ENCODE measurements at regions of chr2 and their contacts with region 1.

Region 1: GRCh38 chr2:47016172-47016913 is 100.7 kb upstream of the MCFD2 start:
- DNase-seq: peak; percentile 93 to 95
- ATAC-seq: peak; percentile 88 to 89
- H3K4me3 ChIP-seq: no peak overlapping the region
- H3K27ac ChIP-seq: peak overlapping the region; percentile 85 to 90 (median 85)
- H3K4me1 ChIP-seq: peaks cover 32 to 48% of the 10 kb centered on the region in 2 donors
- H3K27me3 ChIP-seq: no peaks in the 10 kb centered on the region
- CTCF ChIP-seq: peak in 1 of 5 experiments; percentile 26
- POLR2A ChIP-seq: no peak

Region 2: DNA sequence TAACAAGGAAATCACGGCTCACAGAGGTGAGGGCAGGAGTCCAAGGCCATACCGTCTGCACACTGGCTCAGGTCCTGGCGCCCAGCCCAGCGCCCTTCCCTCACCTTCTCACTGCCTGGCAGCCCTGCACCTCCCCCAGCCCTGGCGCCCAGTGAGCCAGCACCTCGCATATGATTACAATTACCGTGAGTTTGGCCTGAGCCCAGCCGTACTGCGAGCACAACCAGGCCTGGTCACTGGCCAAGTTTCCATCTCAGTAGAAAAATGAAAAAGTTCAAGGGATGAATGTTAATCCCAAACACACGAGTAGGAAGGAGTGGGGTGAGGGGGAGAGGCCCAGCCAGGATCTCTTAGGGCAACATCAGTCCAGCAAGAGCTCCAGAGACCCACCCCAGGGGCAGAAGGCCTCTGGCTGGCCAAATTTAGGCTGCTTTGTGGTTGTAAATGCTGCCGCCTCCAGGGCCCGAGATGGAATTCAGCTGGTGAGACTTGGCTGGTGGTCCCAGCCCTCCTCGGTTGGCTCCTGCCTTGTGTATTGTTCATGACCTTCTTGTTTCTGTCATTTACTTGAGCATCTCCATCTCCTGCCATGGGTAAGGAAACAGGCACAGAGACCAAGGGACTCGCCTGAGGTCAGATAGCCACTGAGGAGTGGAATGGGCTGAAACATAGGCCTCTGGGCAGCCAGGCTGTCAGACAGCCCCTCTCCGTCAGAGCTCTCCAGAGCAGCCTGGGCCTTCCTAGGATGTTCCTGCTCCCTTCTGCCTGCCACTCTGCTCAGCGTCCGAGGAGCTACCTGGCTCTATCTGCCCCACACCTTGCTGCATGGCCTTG is 168.9 kb before region 1 on chr2:
- in situ Hi-C with region 1: no loop called
- intact Hi-C with region 1: no loop called
- DNase-seq: peak; percentile 64 to 71
- ATAC-seq: peak; percentile 47 to 56
- H3K4me3 ChIP-seq: no peak overlapping the region
- H3K27ac ChIP-seq: peak overlapping the region; percentile 59 to 80 (median 76)
- H3K4me1 ChIP-seq: peaks cover 58 to 65% of the 10 kb centered on the region in 2 donors
- H3K27me3 ChIP-seq: no peaks in the 10 kb centered on the region
- CTCF ChIP-seq: no peak
- POLR2A ChIP-seq: no peak

Region 3: DNA sequence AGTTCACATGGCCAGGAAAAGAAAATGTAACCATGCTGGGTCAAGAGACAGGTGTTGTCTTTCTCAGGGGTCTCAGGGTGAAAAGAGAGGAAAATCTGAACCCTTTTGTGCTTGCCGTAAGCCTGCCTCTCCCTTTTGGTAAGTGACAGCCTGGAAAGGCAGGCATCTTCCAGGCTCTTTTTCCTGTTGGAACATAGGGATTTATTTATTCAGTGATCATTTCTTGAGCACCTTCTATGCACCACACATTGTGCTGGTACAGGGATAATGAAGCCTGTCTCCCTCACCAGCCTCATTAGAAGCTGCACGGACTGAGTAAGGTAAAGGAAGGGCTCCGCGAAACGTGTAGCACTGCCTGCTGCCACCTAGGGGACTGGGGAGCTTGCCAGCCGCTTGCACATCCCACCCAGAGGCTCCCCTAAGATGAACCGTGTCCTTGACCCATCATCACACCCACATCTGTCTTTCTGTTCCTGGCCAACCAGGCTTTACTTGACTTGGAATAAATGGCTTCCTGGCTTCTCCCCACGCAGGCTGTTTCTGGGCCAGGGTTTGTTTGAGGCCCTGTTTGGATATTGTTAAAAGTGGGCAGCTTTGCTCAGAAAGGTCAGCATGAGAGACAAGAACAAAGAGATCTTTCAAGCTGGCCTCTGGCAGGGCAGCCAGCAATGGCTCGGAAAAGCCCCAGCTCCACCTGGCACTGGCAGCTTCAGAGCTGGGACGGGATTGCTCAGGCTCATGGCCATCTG is 27.4 kb before region 1 on chr2:
- in situ Hi-C with region 1: no loop called
- intact Hi-C with region 1: loop called (anchors 2 kb)
- DNase-seq: no peak
- ATAC-seq: peak in 1 of 2 donors; percentile 13
- H3K4me3 ChIP-seq: no peak overlapping the region
- H3K27ac ChIP-seq: peak overlapping the region in 3 of 4 donors; percentile 27 to 65 (median 61)
- H3K4me1 ChIP-seq: peaks cover 42 to 47% of the 10 kb centered on the region in 2 donors
- H3K27me3 ChIP-seq: no peaks in the 10 kb centered on the region
- CTCF ChIP-seq: no peak
- POLR2A ChIP-seq: no peak

Region 4: DNA sequence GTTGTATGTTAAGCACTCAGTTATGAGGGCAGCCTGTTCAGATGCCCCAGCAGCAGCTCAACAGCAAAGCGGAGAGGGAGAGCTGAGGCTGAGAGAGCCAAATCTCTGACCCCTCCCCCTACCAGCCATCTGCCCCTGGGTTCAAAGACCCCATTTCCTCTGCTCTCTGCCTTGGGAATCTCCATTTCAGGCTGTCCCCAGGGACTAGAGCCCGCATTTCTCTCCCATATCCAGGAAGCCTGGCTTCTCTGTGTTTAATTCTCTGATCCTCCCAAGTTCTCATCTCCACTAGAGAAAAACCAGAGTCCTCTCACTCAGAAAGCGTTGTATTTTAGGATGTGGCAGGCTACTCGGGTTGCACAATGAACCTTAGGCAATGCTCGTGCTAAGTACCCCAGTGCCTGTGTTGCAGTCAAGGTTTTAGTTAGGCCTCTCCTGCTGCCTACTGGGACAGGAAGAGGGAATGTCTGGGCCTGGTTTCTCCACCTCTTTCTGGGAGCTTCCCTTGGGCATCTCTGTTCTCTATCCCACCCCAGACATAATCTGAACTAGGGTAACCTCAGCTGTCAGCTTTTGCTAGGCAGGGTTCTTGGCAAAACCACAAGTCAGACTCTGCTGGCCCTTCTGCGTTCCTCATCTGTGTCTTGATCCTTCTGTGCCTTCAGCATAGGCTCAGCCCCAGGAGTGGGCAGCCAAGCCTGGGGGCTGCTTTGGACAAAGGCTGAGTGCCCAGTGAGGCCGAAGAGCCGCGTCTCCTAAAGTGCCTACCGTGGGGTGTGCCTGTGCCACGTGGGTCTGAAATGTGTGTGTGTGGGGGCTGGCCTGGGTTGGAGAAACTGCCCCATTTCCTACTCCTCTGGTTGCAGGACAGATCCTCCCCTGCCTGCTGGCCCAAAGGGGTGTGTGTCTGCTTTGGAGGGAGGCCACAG is 41.9 kb after region 1 on chr2:
- in situ Hi-C with region 1: no loop called
- intact Hi-C with region 1: loop called (anchors 1 kb)
- DNase-seq: peak; percentile 69 to 85
- ATAC-seq: peak; percentile 48 to 64
- H3K4me3 ChIP-seq: no peak overlapping the region
- H3K27ac ChIP-seq: peak overlapping the region; percentile 84 to 93 (median 89)
- H3K4me1 ChIP-seq: peaks cover 77 to 80% of the 10 kb centered on the region in 2 donors
- H3K27me3 ChIP-seq: no peaks in the 10 kb centered on the region
- CTCF ChIP-seq: no peak
- POLR2A ChIP-seq: no peak

Region 5: DNA sequence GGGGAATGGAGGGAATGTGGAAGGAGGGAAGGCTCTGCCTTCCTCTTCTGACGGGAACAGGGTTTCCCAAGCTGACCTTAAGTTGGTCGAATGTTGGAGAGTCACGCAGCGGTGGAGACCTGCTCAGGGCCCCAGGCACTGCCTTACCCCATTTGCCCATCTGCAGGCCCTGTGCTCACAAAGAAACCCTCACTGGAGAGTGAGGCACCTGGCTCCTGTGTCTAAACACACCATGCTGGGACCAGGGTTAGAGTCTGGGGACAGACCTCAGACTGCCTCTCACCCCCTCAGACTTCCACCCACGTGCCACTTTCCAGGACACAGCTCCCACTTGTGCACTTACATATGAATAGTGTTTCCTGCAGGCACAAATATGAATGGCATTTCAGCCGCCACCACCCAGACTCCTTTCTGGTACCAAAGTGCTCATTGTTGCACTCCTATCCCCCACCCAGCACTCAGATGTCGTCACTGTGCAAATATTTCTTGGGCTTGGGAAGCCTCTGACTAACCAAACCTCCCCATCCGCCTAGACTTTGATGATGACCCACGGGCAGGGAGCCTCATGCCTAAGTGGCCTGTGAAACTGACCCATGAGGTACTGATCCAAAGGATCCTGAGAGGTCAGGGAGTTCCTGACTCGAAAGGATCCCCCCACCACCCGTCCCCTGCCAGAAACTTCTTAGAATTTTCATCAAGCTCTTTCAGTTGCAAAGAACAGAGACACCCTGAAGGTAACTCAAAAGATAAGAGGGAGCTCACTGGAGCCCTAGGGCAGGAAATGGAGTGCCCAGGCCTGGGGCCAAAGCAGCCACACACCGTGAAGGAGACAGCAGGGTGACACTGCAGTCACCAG is 60.5 kb after region 1 on chr2:
- in situ Hi-C with region 1: no loop called
- intact Hi-C with region 1: no loop called
- DNase-seq: peak in 1 of 2 donors; percentile 31
- ATAC-seq: peak; percentile 20 to 41
- H3K4me3 ChIP-seq: no peak overlapping the region
- H3K27ac ChIP-seq: peak overlapping the region in 2 of 4 donors; percentile 4 to 59
- H3K4me1 ChIP-seq: peaks cover 16 to 22% of the 10 kb centered on the region in 2 donors
- H3K27me3 ChIP-seq: no peaks in the 10 kb centered on the region
- CTCF ChIP-seq: no peak
- POLR2A ChIP-seq: no peak

Region 6: DNA sequence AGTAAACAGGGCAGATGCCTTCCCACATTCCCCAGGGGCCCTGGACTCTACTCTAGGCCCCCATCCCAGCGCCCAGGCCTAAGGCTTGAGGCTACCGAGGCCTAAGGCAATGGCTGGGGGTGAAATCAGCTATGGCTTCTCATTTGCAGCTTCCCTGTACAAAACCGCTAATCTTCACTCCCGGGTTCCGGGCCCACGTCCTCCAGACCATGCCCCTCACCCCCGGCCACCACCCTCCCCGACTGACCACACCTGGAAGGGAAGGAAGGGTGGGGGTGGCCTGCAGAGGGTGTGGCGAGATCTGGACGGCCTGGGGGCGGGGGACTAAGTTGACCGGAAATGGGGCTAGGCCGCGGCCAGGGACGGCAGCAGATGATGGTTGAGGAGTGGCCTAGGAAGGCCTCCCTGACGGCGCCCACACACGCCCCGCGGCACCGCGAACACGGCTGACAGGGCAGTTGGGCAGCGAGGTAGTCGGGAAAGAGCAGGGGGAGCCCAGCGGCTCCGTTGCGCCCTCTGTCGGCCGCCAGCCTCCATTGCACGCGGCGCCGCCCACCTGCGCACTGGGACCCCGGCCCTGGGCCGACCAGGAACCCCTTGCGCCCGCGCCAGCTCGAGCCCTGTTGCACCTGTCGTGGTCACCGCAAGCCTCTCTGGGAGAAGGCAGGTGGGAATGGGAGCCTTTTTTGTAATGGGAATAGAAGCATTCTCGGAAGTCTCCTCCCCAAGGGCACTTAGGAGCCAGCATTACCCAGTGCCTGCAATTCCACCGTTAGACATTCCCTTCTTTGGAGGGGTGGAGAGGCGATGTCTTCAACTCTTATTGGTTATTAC is 255.9 kb after region 1 on chr2:
- in situ Hi-C with region 1: no loop called
- intact Hi-C with region 1: loop called (anchors 2 kb)
- DNase-seq: peak; percentile 22 to 56
- ATAC-seq: peak; percentile 25 to 75
- H3K4me3 ChIP-seq: peak overlapping the region; percentile 33 to 41 (median 36)
- H3K27ac ChIP-seq: peak overlapping the region; percentile 76 to 83 (median 78)
- H3K4me1 ChIP-seq: peaks cover 25 to 38% of the 10 kb centered on the region in 2 donors
- H3K27me3 ChIP-seq: no peaks in the 10 kb centered on the region
- CTCF ChIP-seq: peak; percentile 97 to 98 (median 97)
- POLR2A ChIP-seq: no peak